Motor neuron (in vitro differentiated cells): ENCODE measurements at regions of chrX and their contacts with region 1.

Region 1: GRCh38 chrX:73855546-73855945 is 292.5 kb downstream of the CHIC1 start:
- ATAC-seq: peak; percentile 60 to 83 (median 68)
- H3K4me3 ChIP-seq: no peak overlapping the region
- H3K27ac ChIP-seq: no peak overlapping the region
- H3K4me1 ChIP-seq: peaks cover 0 to 6% of the 10 kb centered on the region in 2 donors

Region 2: GRCh38 chrX:74015379-74016019 is 160.0 kb after region 1 on chrX:
- in situ Hi-C with region 1: loop called in 3 of 9 experiments (anchors 10 to 25 kb)
- ATAC-seq: peak in 5 of 8 experiments; percentile 33 to 91 (median 78)
- H3K4me3 ChIP-seq: no peak overlapping the region
- H3K27ac ChIP-seq: no peak overlapping the region
- H3K4me1 ChIP-seq: no peaks in the 10 kb centered on the region

Region 3: DNA sequence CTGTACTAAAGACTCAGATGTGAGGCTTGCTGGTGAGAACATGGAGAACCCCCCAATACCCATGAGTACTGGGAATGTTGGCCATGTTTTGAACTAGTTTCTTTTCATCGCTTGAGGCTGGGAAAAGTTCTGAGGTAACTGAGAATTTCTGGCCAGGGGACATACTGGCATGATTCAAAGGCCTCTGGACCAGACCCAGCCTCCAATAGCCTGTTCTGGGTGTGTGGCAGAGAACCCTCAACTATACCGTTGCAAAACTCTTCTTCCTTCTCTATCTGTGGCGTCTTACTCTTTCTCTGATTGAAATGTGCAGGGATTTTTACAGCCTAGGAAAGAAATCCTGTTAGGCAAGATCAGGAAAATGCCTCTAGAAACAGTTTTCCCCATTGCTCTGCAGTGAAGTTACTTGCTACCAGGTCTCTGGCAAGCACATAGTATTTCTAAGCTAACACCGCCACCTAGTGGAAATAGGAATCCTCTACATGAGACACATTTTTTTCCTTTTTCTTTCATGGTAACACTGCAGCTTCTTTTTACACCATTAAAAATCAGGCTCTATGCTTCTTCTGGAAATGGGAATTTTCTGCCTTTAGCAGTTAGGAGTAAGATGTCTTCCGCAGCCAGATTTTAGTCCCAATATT is 277.7 kb after region 1 on chrX:
- in situ Hi-C with region 1: loop called in 3 of 9 experiments (anchors 10 to 25 kb)
- ATAC-seq: peak in 7 of 8 experiments; percentile 46 to 77 (median 65)
- H3K4me3 ChIP-seq: no peak overlapping the region
- H3K27ac ChIP-seq: no peak overlapping the region
- H3K4me1 ChIP-seq: no peaks in the 10 kb centered on the region